CD4-positive, alpha-beta T cell (primary cell): ENCODE measurements at regions of chr15 and their contacts with region 1.

Region 1: GRCh38 chr15:60859996-60860494 is 369.1 kb downstream of the RORA start:
- DNase-seq: peak in 1 of 14 experiments; percentile 46
- ATAC-seq: no peak
- H3K4me3 ChIP-seq: no peak overlapping the region
- H3K4me3 Mint-ChIP-seq: no peak overlapping the region
- H3K27ac ChIP-seq: no peak overlapping the region
- H3K27ac Mint-ChIP-seq: no peak overlapping the region
- H3K4me1 ChIP-seq: no peaks in the 10 kb centered on the region
- H3K4me1 Mint-ChIP-seq: peaks cover 41% of the 10 kb centered on the region
- H3K27me3 ChIP-seq: no peaks in the 10 kb centered on the region
- H3K27me3 Mint-ChIP-seq: no peaks in the 10 kb centered on the region
- CTCF ChIP-seq: no peak

Region 2: GRCh38 chr15:59825913-59826312 is 1034.1 kb before region 1 on chr15:
- CTCF ChIA-PET with region 1: no interaction called
- POLR2A ChIA-PET with region 1: no interaction called
- intact Hi-C with region 1: no loop called
- DNase-seq: no peak
- ATAC-seq: no peak
- H3K4me3 ChIP-seq: no peak overlapping the region
- H3K4me3 Mint-ChIP-seq: no peak overlapping the region
- H3K27ac ChIP-seq: no peak overlapping the region
- H3K27ac Mint-ChIP-seq: no peak overlapping the region
- H3K4me1 ChIP-seq: no peaks in the 10 kb centered on the region
- H3K4me1 Mint-ChIP-seq: no peaks in the 10 kb centered on the region
- H3K27me3 ChIP-seq: no peaks in the 10 kb centered on the region
- H3K27me3 Mint-ChIP-seq: no peaks in the 10 kb centered on the region
- CTCF ChIP-seq: no peak

Region 3: DNA sequence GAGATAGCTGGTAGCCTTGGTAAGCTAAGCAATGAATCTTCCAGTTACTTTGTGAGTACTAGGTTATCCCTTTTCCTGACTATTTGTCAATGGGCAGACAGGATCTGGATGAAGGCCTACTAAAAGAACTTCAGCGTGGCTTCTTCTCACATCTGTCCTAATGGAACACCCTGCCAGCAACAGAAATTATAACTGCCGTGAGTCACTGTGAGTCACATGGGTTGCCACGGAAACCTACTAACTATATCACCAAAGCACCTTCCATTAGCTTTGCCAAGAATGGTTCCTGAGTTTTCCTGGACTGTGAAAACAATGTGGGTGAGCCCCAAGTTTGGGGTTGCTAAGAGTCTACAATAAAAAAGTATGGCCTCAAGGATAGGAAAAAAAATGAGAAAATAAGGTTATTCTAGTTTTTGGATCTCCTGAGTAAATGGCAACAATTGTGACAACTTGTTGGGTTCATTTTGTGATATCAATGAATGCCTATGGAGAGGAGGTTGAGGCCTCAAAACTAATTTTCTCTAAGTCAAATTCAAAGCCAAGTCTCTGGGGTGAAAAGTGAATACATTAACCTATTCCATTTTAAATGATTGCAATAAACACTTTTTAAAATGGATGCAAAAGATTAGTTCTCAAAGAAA is 186.0 kb before region 1 on chr15:
- CTCF ChIA-PET with region 1: interaction called, 3 read pairs
- POLR2A ChIA-PET with region 1: interaction called, 7 read pairs
- intact Hi-C with region 1: loop called in 1 of 2 experiments (anchors 5 kb)
- DNase-seq: peak in 3 of 14 experiments; percentile 13 to 55 (median 30)
- ATAC-seq: no peak
- H3K4me3 ChIP-seq: no peak overlapping the region
- H3K4me3 Mint-ChIP-seq: no peak overlapping the region
- H3K27ac ChIP-seq: no peak overlapping the region
- H3K27ac Mint-ChIP-seq: no peak overlapping the region
- H3K4me1 ChIP-seq: no peaks in the 10 kb centered on the region
- H3K4me1 Mint-ChIP-seq: peaks cover 20% of the 10 kb centered on the region
- H3K27me3 ChIP-seq: no peaks in the 10 kb centered on the region
- H3K27me3 Mint-ChIP-seq: no peaks in the 10 kb centered on the region
- CTCF ChIP-seq: no peak

Region 4: DNA sequence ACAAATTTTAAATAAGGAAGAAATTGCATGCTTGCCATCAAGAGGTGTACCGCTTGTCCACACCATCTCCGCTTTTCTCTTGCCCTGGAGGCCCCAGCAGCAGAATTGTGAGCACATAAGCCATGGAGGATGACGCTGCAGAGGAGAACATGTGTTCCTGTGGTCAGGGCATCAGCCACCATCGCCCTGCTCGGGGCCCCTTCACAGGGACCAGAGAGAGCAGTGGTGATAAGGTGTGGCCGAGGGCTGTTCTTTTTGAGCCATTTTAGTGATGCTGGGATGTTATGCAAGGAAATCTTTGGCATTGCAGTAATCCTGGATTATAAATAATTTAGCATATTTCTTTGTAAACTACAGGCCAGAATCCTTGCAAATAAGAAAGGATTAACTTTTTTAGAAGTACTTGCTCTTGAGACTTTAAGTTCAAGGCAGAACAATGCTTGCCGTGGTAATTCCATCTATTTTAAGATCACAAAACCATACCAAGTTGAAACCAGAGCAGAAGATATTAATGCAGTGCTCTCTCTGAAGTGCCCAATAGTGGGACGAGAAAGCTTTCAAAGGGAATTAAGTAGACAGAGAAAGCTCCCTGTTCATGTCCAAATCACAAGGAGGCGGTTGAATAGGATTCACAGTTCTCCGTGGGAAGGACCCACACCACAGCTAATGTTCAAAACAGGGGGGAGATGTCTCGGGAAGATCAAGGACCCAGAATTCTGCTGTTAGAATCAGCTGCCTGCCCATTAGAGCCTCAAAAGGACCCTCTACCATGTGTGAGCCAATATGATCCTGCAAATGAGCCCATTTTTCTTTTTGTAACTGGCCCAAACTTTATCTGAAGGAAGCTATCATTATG is 30.6 kb after region 1 on chr15:
- CTCF ChIA-PET with region 1: no interaction called
- POLR2A ChIA-PET with region 1: no interaction called
- intact Hi-C with region 1: loop called in 1 of 2 experiments (anchors 1 kb)
- DNase-seq: no peak
- ATAC-seq: no peak
- H3K4me3 ChIP-seq: no peak overlapping the region
- H3K4me3 Mint-ChIP-seq: no peak overlapping the region
- H3K27ac ChIP-seq: no peak overlapping the region
- H3K27ac Mint-ChIP-seq: no peak overlapping the region
- H3K4me1 ChIP-seq: no peaks in the 10 kb centered on the region
- H3K4me1 Mint-ChIP-seq: no peaks in the 10 kb centered on the region
- H3K27me3 ChIP-seq: no peaks in the 10 kb centered on the region
- H3K27me3 Mint-ChIP-seq: no peaks in the 10 kb centered on the region
- CTCF ChIP-seq: no peak